ENCODE measurements at regions of chr6 and their contacts with region 1.

Region 1: DNA sequence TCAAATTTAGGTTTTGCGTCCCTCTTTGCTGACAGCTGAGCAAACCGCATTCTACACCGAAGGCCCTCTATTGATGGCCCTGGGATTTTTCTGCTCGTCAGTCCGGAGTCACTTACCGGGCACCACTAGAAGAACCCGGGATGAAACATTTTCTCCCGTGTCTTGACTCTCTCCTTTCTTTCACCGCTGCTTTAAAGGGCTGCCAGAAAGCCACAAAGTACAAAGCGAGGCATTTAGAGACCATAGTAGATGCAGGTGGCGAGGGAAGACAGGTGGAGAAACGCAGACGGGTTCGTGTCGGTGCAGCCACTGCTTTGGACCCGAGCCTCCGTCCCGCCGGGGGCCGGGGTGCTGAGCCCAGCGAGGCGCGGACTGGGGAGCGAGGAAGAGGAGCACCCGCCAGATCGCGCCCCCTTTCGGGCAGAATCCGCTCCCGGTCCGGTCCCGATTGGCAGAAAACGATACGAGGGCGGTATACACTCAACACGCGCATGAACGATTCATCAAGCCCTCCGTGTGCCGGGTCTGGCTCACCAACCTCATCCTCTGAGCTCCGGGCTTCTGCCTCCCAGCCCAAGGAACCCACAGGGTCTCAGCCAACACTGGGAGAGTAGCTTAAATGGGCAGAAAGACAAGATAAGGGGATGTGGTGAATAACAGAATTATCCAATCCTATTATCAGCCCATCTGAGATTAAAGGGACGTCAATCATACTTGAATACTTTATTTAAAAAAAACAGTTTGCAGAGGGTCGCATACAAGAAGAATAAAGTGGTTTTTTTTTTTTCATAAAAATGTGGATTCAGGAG is 84.9 kb downstream of the TRIM27 start:
- DNase-seq: peak; percentile 66 to 92 (median 81)
- ATAC-seq: peak; percentile 74 to 76
- H3K4me3 Mint-ChIP-seq: peak overlapping the region; percentile 92 to 99 (median 96)
- H3K27ac Mint-ChIP-seq: peak overlapping the region; percentile 90 to 98 (median 92)
- H3K4me1 Mint-ChIP-seq: peaks cover 12 to 28% (median 19%) of the 10 kb centered on the region in 4 donors
- H3K27me3 Mint-ChIP-seq: peaks cover 7 to 34% (median 13%) of the 10 kb centered on the region in 5 donors

Region 2: GRCh38 chr6:28863604-28864320 is 24.9 kb after region 1 on chr6:
- POLR2A ChIA-PET with region 1: interaction called, 41 read pairs
- DNase-seq: peak; percentile 52 to 96 (median 88)
- ATAC-seq: peak; percentile 36 to 45
- H3K4me3 Mint-ChIP-seq: peak overlapping the region; percentile 89 to 98 (median 96)
- H3K27ac Mint-ChIP-seq: peak overlapping the region; percentile 85 to 100 (median 95)
- H3K4me1 Mint-ChIP-seq: peaks cover 23 to 50% (median 40%) of the 10 kb centered on the region in 4 donors
- H3K27me3 Mint-ChIP-seq: peaks cover 0 to 8% (median 0%) of the 10 kb centered on the region in 5 donors

Region 3: DNA sequence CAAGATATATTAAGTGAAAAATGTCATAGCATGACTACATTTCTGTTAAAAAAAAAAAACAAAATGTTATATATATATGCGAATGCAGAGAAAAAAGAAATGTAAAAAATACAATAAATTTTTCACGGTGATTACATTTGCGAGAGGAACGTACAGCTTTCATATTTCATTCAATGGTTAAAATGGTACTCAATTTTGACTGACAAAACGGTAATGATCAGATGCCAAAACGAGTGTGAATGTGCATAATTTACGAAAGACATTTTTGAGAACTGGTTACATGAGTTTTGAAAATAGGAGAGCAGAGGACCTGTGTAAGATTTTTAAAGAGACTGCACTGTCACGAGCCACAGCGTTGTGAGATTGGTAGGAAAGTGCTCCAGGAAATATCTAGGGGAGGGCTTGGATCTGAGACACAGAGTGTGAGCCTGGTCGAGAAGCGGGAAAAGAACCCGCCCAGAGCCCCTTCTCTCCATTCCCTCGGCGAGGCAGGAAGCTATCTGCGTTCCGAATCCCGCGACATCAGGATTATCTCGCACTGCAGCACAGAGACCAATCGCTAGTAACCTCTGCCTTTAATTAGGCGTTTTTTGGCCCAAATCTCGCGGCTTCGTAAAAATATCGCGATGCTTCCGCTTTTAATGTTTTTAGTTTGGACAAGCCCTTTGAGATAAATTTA is 56.4 kb after region 1 on chr6:
- POLR2A ChIA-PET with region 1: interaction called, 28 read pairs
- DNase-seq: peak; percentile 66 to 98 (median 94)
- ATAC-seq: peak; percentile 69 to 73
- H3K4me3 Mint-ChIP-seq: peak overlapping the region; percentile 95 to 99 (median 98)
- H3K27ac Mint-ChIP-seq: peak overlapping the region; percentile 99 to 100 (median 100)
- H3K4me1 Mint-ChIP-seq: peaks cover 8 to 23% (median 13%) of the 10 kb centered on the region in 4 donors
- H3K27me3 Mint-ChIP-seq: peaks cover 0 to 6% (median 0%) of the 10 kb centered on the region in 5 donors

Region 4: DNA sequence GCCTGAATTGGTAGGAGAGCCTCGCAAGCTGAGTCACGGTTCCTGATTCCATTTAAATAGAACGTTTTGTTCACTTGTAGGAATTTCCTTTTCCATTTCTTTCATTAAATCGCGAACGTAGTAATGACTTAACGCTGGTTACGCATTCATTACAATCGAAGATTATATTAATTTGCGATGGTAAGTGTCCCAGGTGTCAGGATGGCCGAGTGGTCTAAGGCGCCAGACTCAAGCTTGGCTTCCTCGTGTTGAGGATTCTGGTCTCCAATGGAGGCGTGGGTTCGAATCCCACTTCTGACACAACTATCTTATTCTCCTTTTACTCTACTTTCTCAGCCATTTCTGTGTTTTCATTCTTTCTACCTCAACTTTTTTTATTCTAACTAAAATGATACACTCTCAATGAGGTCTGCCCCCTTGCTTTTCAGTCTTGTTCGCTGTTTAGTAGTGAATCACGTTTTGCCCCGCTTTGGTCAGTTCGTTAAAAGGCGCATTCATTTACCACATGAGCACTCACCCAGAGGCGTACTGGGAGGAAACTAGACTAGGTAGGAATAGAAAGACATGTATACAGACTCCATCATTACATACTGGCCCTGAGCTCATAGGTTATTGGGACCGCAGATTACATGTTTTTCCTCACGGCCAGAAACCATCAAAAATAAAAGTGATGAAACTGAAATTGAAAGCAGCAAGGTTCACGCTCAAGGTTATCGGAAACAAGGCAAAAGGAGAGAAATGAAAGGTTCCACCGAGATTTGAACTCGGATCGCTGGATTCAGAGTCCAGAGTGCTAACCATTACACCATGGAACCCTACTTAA is 102.2 kb after region 1 on chr6:
- POLR2A ChIA-PET with region 1: interaction called, 10 read pairs
- DNase-seq: peak; percentile 41 to 89 (median 84)
- ATAC-seq: peak; percentile 65 to 70
- H3K4me3 Mint-ChIP-seq: peak overlapping the region; percentile 84 to 98 (median 94)
- H3K27ac Mint-ChIP-seq: peak overlapping the region; percentile 92 to 99 (median 94)
- H3K4me1 Mint-ChIP-seq: peaks cover 27 to 61% (median 56%) of the 10 kb centered on the region in 4 donors
- H3K27me3 Mint-ChIP-seq: peaks cover 0 to 11% (median 0%) of the 10 kb centered on the region in 5 donors

Region 5: GRCh38 chr6:29016559-29017427 is 178.0 kb after region 1 on chr6:
- POLR2A ChIA-PET with region 1: interaction called, 23 read pairs
- DNase-seq: peak; percentile 63 to 89 (median 79)
- ATAC-seq: peak; percentile 73 to 75
- H3K4me3 Mint-ChIP-seq: peak overlapping the region; percentile 82 to 95 (median 91)
- H3K27ac Mint-ChIP-seq: peak overlapping the region; percentile 65 to 96 (median 82)
- H3K4me1 Mint-ChIP-seq: peaks cover 12 to 20% (median 19%) of the 10 kb centered on the region in 4 donors
- H3K27me3 Mint-ChIP-seq: peaks cover 0 to 42% (median 5%) of the 10 kb centered on the region in 5 donors

Measured in naive thymus-derived CD8-positive, alpha-beta T cell (primary cell).